Endothelial cell of umbilical vein (primary cell): ENCODE measurements at regions of chr22 and their contacts with region 1.

Region 1: DNA sequence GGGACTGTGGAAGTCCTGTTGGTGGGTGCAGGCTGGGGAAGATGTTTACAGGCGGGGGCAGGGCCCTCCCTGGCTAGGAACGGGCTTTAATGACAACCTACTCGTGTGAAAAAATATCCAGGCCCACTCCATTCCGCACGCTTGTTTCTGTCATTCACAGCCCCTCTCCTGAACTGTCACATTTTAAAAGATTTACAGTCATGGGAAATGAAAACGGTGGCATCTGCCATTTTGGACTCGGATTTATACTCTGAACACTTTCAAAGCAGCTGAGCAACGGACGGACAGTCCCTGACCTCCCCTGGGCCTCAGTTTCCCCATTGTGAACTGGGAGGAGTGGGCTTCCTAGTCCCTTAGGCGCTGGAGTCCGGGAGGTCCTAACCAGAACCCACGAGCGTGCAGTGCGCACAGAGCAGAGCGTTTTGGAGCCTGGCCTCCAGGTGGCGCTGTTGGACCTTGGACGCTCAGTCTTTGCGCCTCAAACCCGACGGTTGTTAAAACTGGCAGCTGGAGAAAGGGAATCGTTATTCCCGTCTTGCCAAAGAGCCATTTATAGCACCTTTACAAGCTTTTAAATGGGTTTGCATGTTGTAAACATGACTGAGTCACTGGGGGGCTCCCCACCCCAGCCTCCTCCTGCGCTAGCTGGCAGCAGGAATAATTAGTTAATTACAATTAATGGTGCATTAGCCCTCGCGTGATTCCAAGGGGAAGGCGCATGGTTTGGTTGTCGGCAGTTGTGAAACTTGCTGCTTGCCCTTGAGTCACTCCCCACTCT is 75.3 kb downstream of the FBLN1 start:
- DNase-seq: peak; percentile 71
- H3K4me3 ChIP-seq: no peak overlapping the region
- H3K27ac ChIP-seq: no peak overlapping the region
- H3K4me1 ChIP-seq: no peaks in the 10 kb centered on the region
- H3K27me3 ChIP-seq: peaks cover 0 to 2% of the 10 kb centered on the region in 2 experiments
- CTCF ChIP-seq: peak; percentile 89 to 94
- POLR2A ChIP-seq: no peak

Region 2: DNA sequence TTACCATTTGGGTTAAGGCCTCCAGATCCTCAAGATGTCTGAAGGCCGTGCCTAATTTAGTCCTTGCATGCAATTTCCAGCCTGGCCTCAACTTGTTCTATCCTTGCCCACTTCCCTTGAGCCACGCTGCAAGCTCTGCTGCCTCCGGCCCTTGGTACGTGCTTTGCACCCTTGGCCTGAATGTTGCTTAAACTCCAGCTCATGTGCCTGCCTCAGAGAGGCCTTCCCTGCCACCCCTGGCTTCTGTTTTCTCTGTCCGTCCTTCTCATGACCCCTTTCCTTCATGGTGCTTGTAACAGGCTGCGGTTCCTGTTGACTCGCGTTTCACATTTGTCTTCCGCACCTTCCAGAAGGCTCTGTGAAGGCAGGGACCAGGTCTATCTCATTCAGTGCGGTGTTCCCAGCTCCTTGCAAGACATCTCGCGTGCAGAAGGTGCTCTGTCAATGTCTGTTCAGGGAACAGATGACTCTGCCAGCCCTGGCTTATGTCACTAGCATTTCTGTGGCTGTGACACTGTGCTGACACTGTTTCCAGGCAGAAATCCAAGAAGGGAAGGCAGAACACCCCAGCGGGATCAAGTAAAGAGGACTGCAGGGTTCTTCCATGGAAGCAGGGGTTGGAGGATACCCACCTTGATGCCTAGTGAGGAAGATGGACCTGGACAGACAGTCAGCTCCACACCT is 13.4 kb before region 1 on chr22:
- CTCF ChIA-PET with region 1: interaction called, 13 read pairs
- POLR2A ChIA-PET with region 1: no interaction called
- dilution Hi-C with region 1: no loop called
- intact Hi-C with region 1: no loop called
- DNase-seq: no peak
- H3K4me3 ChIP-seq: no peak overlapping the region
- H3K27ac ChIP-seq: no peak overlapping the region
- H3K4me1 ChIP-seq: no peaks in the 10 kb centered on the region
- H3K27me3 ChIP-seq: peaks cover 0 to 7% of the 10 kb centered on the region in 2 experiments
- CTCF ChIP-seq: no peak
- POLR2A ChIP-seq: no peak

Region 3: GRCh38 chr22:45645526-45646414 is 67.8 kb after region 1 on chr22:
- CTCF ChIA-PET with region 1: interaction called, 6 read pairs
- POLR2A ChIA-PET with region 1: no interaction called
- dilution Hi-C with region 1: no loop called
- intact Hi-C with region 1: loop called (anchors 1 kb)
- DNase-seq: peak; percentile 34
- H3K4me3 ChIP-seq: no peak overlapping the region
- H3K27ac ChIP-seq: no peak overlapping the region
- H3K4me1 ChIP-seq: no peaks in the 10 kb centered on the region
- H3K27me3 ChIP-seq: peaks cover 18 to 21% of the 10 kb centered on the region in 2 experiments
- CTCF ChIP-seq: peak; percentile 84 to 91
- POLR2A ChIP-seq: no peak

Region 4: GRCh38 chr22:46335201-46336118 is 757.5 kb after region 1 on chr22 and contains the start of gene TRMU:
- CTCF ChIA-PET with region 1: no interaction called
- POLR2A ChIA-PET with region 1: no interaction called
- dilution Hi-C with region 1: no loop called
- intact Hi-C with region 1: no loop called
- DNase-seq: peak; percentile 84
- H3K4me3 ChIP-seq: peak within 1 kb of the TSS; percentile 76 to 98 (median 84)
- H3K27ac ChIP-seq: peak within 1 kb of the TSS; percentile 41
- H3K4me1 ChIP-seq: peaks cover 7% of the 10 kb centered on the region
- H3K27me3 ChIP-seq: no peaks in the 10 kb centered on the region
- CTCF ChIP-seq: no peak
- POLR2A ChIP-seq: peak; percentile 79
- total RNA-seq, gene TRMU: 60.4 and 65.7 TPM in 2 replicates